ENCODE measurements at regions of chr6 and their contacts with region 1.

Region 1: GRCh38 chr6:14066782-14067406 is 50.7 kb upstream of the CD83 start:
- DNase-seq: no peak
- H3K4me3 ChIP-seq: no peak overlapping the region
- H3K27ac ChIP-seq: no peak overlapping the region
- H3K4me1 ChIP-seq: peaks cover 0 to 2% (median 0%) of the 10 kb centered on the region in 4 donors
- H3K27me3 ChIP-seq: peaks cover 15% of the 10 kb centered on the region
- CTCF ChIP-seq: peak; percentile 55 to 64 (median 64)
- EP300 ChIP-seq: no peak
- POLR2A ChIP-seq: no peak

Region 2: GRCh38 chr6:13328076-13328874 is 738.6 kb before region 1 on chr6 and contains the start of gene TBC1D7:
- in situ Hi-C with region 1: loop called in 1 of 4 experiments (anchors 25 kb)
- intact Hi-C with region 1: no loop called
- DNase-seq: peak; percentile 95
- H3K4me3 ChIP-seq: peak within 1 kb of the TSS; percentile 55 to 98 (median 78)
- H3K27ac ChIP-seq: peak within 1 kb of the TSS; percentile 90 to 98 (median 94)
- H3K4me1 ChIP-seq: peaks cover 6 to 18% (median 13%) of the 10 kb centered on the region in 4 donors
- H3K27me3 ChIP-seq: no peaks in the 10 kb centered on the region
- CTCF ChIP-seq: peak in 4 of 5 experiments; percentile 16 to 60 (median 27)
- EP300 ChIP-seq: no peak
- POLR2A ChIP-seq: peak; percentile 94
- total RNA-seq, gene TBC1D7: 10.5 to 39.8 (median 15.0) TPM

Region 3: DNA sequence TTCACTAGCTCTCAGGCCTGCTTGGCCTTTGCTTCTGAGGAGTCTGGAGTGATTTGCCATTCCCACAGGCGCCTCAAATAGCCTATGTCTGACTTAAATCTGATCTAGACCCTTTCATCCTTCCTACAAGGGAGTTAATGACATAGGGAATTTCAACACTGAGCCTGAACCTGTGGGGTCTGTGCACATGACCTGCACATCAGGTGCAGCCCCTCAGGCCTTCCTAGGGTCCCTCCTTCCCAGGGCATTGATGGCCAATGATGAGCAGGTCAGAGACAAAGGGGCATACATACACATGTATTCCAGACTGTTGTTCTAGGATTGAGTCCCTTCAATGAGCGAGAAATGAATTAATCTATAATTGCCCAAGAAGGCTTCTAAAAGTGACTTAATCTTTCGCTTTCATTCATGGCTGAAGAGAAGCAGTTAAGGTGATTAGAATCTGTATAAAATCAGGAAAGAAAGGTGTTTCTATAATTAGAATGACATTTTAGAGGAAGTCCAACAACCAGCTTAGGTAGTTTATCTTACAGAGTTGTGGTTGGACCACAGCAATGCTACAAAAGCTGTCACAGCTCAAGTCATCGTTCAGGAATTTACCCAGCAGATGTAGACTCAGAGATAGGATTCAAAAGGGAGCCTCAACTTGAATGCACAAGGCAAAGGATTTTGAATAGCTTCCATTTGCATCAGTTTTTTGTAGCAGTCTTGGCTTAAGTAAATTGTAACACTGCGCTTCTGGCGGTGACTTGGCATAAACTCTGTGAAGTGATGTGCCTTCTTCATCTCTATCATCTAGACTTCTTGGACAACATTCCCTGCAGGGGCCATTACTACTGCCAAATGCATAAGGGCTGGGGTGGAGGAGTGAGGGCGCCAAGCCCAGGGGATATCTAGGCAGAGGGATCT is 711.6 kb before region 1 on chr6:
- in situ Hi-C with region 1: loop called in 1 of 4 experiments (anchors 25 kb)
- intact Hi-C with region 1: no loop called
- DNase-seq: no peak
- H3K4me3 ChIP-seq: no peak overlapping the region
- H3K27ac ChIP-seq: peak overlapping the region; percentile 49 to 65 (median 56)
- H3K4me1 ChIP-seq: peaks cover 0 to 20% (median 12%) of the 10 kb centered on the region in 4 donors
- H3K27me3 ChIP-seq: no peaks in the 10 kb centered on the region
- CTCF ChIP-seq: no peak
- EP300 ChIP-seq: no peak
- POLR2A ChIP-seq: no peak

Region 4: DNA sequence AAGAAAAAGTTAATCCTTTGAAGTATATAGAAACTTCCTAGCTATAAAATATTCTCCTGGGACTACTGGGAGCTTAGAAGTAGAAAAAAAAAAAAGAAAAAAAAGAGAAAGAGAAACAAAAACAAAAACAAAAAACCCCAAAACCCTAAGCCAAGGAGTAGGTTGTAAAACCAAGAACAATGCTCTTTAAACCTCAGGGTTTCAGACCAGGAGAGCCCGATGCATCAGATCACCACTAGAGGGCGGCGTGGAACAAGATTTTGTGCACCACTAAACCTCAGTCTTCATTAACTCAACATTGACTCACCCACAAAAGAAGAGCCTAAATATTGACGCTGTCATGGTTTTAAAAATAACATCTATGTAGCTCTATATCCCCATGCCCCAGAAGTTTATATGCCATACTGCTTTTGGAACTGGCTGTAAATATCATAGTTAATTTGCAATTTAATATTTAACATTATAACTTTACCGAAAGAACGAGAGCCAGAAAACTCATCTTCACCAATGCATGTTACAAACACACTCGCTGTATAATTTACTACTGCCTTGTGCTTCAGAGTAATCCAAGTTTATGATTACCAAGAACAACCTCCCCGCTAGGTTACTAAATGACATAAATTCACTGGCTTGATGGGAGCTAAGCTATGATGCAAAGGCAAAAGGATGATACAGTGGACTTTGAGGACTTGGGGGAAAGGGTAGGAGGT is 271.7 kb before region 1 on chr6:
- in situ Hi-C with region 1: loop called in 2 of 4 experiments (anchors 10 kb)
- intact Hi-C with region 1: no loop called
- DNase-seq: peak; percentile 88
- H3K4me3 ChIP-seq: no peak overlapping the region
- H3K27ac ChIP-seq: peak overlapping the region in 2 of 4 donors; percentile 12 to 50
- H3K4me1 ChIP-seq: no peaks in the 10 kb centered on the region
- H3K27me3 ChIP-seq: no peaks in the 10 kb centered on the region
- CTCF ChIP-seq: peak; percentile 89 to 94 (median 92)
- EP300 ChIP-seq: no peak
- POLR2A ChIP-seq: no peak

Region 5: DNA sequence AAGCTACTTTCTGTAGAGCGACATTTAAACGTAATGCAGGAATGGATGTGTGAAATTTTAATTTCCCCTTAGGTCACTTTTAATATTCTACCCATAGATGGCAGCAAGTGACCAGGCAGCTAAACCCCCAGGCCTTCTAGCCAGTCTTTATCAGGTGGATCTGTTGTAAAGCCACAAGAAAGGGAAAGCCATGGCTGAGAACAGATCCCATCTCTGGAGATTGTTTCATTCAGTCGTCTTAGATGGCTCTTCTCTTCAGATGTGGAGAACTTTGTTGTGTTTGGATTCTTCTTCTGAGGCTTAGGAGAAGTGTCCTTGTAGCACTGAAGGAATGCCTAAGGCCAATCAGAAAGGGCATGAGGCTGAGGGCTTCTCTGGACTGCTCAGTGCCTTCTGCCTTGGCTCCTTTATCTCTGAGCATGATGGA is 157.9 kb before region 1 on chr6:
- in situ Hi-C with region 1: loop called (anchors 10 kb)
- intact Hi-C with region 1: loop called (anchors 5 kb)
- DNase-seq: peak; percentile 36
- H3K4me3 ChIP-seq: no peak overlapping the region
- H3K27ac ChIP-seq: no peak overlapping the region
- H3K4me1 ChIP-seq: no peaks in the 10 kb centered on the region
- H3K27me3 ChIP-seq: peaks cover 37% of the 10 kb centered on the region
- CTCF ChIP-seq: peak; percentile 69 to 83 (median 75)
- EP300 ChIP-seq: no peak
- POLR2A ChIP-seq: no peak

Measured in transverse colon (tissue), 4 donors.